ENCODE measurements at regions of chr5 and their contacts with region 1.

Region 1: DNA sequence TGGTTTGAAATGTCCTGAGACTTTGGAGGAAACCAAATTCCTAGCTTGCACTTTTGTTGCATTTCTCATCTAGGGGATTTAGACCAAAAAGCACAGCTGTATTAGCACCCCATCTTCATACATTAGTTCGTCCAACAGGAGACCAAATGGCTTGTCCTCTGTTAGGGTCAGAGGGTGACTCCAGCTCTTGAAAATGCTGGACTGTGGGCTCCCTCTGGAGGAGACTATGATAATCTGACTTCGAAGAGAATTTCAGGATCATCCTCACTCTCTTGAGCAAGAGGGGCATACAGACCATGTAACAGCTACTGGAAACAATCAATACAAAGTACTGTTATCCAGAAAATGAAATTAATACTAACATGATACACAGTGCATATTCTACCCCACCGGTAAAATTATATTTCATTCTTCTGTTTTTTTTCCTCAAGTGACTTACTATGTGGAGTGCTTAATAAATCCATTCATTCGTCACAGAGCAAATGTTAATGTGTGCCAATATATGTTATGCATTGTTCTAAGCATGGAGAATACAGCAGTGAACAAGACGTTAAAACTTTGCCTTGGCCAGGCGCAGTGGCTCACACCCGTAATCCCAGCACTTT is 63.7 kb upstream of the PPP2CA start:
- DNase-seq: peak in 7 of 9 donors; percentile 13 to 61 (median 50)
- ATAC-seq: peak; percentile 91
- H3K4me3 ChIP-seq: no peak overlapping the region
- H3K4me3 Mint-ChIP-seq: no peak overlapping the region
- H3K27ac ChIP-seq: no peak overlapping the region
- H3K27ac Mint-ChIP-seq: no peak overlapping the region
- H3K4me1 ChIP-seq: no peaks in the 10 kb centered on the region
- H3K4me1 Mint-ChIP-seq: peaks cover 0 to 6% (median 0%) of the 10 kb centered on the region in 7 donors
- H3K27me3 ChIP-seq: no peaks in the 10 kb centered on the region
- H3K27me3 Mint-ChIP-seq: peaks cover 0 to 39% (median 3%) of the 10 kb centered on the region in 5 donors

Region 2: DNA sequence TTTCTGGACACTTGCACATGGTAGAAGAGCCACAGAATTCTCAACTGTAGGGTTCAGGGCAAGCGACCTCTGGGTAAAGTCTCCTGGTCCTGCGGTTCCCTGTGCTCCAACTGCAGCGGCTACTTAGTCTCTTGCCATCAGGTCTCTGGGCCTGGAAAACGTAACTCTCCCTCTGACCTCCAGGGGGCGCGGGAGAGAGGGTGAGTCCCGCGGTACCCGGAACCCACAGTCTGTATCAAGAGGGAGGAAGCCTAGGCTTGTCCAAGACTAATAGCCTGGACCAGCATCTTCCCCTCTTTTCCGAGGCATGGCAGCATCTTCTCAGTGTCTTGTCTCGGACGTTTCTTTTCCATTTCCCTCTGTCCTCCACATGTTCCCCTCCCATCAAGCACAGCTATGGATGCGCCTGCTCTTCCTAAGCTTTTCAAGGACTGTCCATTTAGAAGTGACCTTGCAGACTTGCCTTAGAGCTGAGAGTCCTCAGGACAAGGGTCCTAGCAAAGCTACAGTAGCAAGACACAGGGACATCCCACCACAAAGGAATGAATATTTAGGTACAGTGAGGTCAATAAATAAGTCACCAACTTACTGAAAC is 736.6 kb before region 1 on chr5:
- CTCF ChIA-PET with region 1: no interaction called
- POLR2A ChIA-PET with region 1: no interaction called
- intact Hi-C with region 1: loop called in 1 of 2 experiments (anchors 5 kb)
- DNase-seq: peak; percentile 20 to 65 (median 32)
- ATAC-seq: peak; percentile 70
- H3K4me3 ChIP-seq: no peak overlapping the region
- H3K4me3 Mint-ChIP-seq: no peak overlapping the region
- H3K27ac ChIP-seq: no peak overlapping the region
- H3K27ac Mint-ChIP-seq: no peak overlapping the region
- H3K4me1 ChIP-seq: no peaks in the 10 kb centered on the region
- H3K4me1 Mint-ChIP-seq: peaks cover 0 to 3% (median 0%) of the 10 kb centered on the region in 7 donors
- H3K27me3 ChIP-seq: no peaks in the 10 kb centered on the region
- H3K27me3 Mint-ChIP-seq: peaks cover 24 to 57% (median 43%) of the 10 kb centered on the region in 5 donors

Region 3: GRCh38 chr5:134026521-134027268 is 262.9 kb before region 1 on chr5:
- CTCF ChIA-PET with region 1: interaction called, 4 read pairs
- POLR2A ChIA-PET with region 1: interaction called, 3 read pairs
- intact Hi-C with region 1: loop called (anchors 1 to 5 kb)
- DNase-seq: peak in 8 of 9 donors; percentile 41 to 73 (median 62)
- ATAC-seq: peak; percentile 96
- H3K4me3 ChIP-seq: no peak overlapping the region
- H3K4me3 Mint-ChIP-seq: no peak overlapping the region
- H3K27ac ChIP-seq: no peak overlapping the region
- H3K27ac Mint-ChIP-seq: peak overlapping the region in 2 of 9 donors; percentile 36 to 52
- H3K4me1 ChIP-seq: no peaks in the 10 kb centered on the region
- H3K4me1 Mint-ChIP-seq: peaks cover 1 to 6% (median 4%) of the 10 kb centered on the region in 7 donors
- H3K27me3 ChIP-seq: no peaks in the 10 kb centered on the region
- H3K27me3 Mint-ChIP-seq: peaks cover 0 to 17% (median 0%) of the 10 kb centered on the region in 5 donors

Region 4: GRCh38 chr5:134184155-134185135 is 105.2 kb before region 1 on chr5:
- CTCF ChIA-PET with region 1: interaction called, 30 read pairs
- POLR2A ChIA-PET with region 1: interaction called, 3 read pairs
- intact Hi-C with region 1: loop called (anchors 1 kb)
- DNase-seq: peak; percentile 52 to 83 (median 65)
- ATAC-seq: peak; percentile 94
- H3K4me3 ChIP-seq: no peak overlapping the region
- H3K4me3 Mint-ChIP-seq: no peak overlapping the region
- H3K27ac ChIP-seq: no peak overlapping the region
- H3K27ac Mint-ChIP-seq: peak overlapping the region in 1 of 9 donors; percentile 16
- H3K4me1 ChIP-seq: no peaks in the 10 kb centered on the region
- H3K4me1 Mint-ChIP-seq: peaks cover 0 to 5% (median 0%) of the 10 kb centered on the region in 7 donors
- H3K27me3 ChIP-seq: no peaks in the 10 kb centered on the region
- H3K27me3 Mint-ChIP-seq: peaks cover 0 to 4% (median 0%) of the 10 kb centered on the region in 5 donors